ENCODE measurements at regions of chr5 and their contacts with region 1.

Region 1: GRCh38 chr5:127564002-127564769 is 46.7 kb downstream of the PRRC1 start:
- DNase-seq: peak; percentile 62
- H3K4me3 ChIP-seq: no peak overlapping the region
- H3K27ac ChIP-seq: no peak overlapping the region
- H3K4me1 ChIP-seq: no peaks in the 10 kb centered on the region
- H3K27me3 ChIP-seq: no peaks in the 10 kb centered on the region
- CTCF ChIP-seq: peak; percentile 55

Region 2: DNA sequence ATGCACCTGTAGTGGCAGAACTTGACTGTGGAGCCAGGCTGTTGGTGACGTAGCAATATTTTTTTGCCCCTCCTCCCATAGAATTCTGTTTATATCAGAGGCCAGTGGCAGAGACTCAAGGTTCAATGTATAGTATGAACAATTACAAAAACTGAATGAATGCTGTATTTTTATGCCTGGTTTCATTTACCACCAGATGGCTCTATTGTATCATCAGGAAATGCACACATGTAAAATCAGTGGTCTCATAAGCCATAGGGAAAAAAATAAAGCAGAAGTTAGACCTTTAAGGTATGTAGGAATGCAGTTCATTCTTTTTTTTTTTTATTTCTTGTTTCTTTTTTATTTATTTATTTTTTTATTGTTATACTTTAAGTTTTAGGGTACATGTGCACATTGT is 182.6 kb after region 1 on chr5:
- intact Hi-C with region 1: loop called (anchors 10 kb)
- DNase-seq: no peak
- H3K4me3 ChIP-seq: no peak overlapping the region
- H3K27ac ChIP-seq: no peak overlapping the region
- H3K4me1 ChIP-seq: no peaks in the 10 kb centered on the region
- H3K27me3 ChIP-seq: no peaks in the 10 kb centered on the region
- CTCF ChIP-seq: peak; percentile 51